CD4-positive, alpha-beta T cell (primary cell): ENCODE measurements at regions of chr7 and their contacts with region 1.

Region 1: DNA sequence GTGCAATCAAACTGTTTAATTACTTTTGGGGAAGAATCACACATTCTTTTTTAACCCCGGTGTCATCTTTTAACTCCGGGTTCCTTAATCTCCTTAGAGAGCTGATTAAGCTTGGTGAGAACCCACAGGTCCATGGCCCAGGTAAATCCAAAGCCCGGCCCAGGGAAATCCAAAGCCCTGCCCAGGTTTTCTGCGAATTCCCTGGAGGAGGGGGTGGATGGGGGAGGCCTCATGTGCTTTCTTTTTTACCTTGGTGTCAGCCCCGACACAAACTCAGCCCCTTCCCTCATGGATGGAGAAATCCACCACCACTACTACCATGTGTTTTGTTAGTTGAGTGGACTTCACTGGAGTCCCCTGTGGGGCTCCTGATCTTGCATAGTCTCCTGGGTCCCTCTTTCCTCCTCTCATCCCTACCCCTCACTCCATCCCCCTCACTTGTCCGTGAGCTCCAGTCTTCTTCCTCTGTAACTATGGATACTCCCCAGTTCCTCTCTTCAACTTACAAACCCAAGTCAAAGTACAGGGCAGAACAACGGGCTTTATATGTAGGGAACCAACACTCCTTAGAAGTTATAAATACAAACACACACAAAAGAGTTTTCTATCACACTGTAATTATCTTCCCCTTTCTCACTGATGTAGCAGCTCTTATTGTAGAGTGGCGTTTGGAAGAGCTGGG is 13.3 kb downstream of the SNX10 start:
- DNase-seq: no peak
- ATAC-seq: no peak
- H3K4me3 ChIP-seq: no peak overlapping the region
- H3K4me3 Mint-ChIP-seq: no peak overlapping the region
- H3K27ac ChIP-seq: no peak overlapping the region
- H3K27ac Mint-ChIP-seq: peak overlapping the region; percentile 27
- H3K4me1 ChIP-seq: peaks cover 11% of the 10 kb centered on the region
- H3K4me1 Mint-ChIP-seq: peaks cover 32% of the 10 kb centered on the region
- H3K27me3 ChIP-seq: no peaks in the 10 kb centered on the region
- H3K27me3 Mint-ChIP-seq: no peaks in the 10 kb centered on the region
- CTCF ChIP-seq: no peak

Region 2: GRCh38 chr7:26437003-26437532 is 132.1 kb after region 1 on chr7:
- CTCF ChIA-PET with region 1: no interaction called
- POLR2A ChIA-PET with region 1: no interaction called
- intact Hi-C with region 1: no loop called
- DNase-seq: no peak
- ATAC-seq: no peak
- H3K4me3 ChIP-seq: no peak overlapping the region
- H3K4me3 Mint-ChIP-seq: no peak overlapping the region
- H3K27ac ChIP-seq: no peak overlapping the region
- H3K27ac Mint-ChIP-seq: no peak overlapping the region
- H3K4me1 ChIP-seq: no peaks in the 10 kb centered on the region
- H3K4me1 Mint-ChIP-seq: no peaks in the 10 kb centered on the region
- H3K27me3 ChIP-seq: no peaks in the 10 kb centered on the region
- H3K27me3 Mint-ChIP-seq: peaks cover 26% of the 10 kb centered on the region
- CTCF ChIP-seq: no peak

Region 3: GRCh38 chr7:26525398-26526264 is 220.7 kb after region 1 on chr7:
- CTCF ChIA-PET with region 1: no interaction called
- POLR2A ChIA-PET with region 1: no interaction called
- intact Hi-C with region 1: loop called in 1 of 2 experiments (anchors 5 kb)
- DNase-seq: no peak
- ATAC-seq: no peak
- H3K4me3 ChIP-seq: no peak overlapping the region
- H3K4me3 Mint-ChIP-seq: no peak overlapping the region
- H3K27ac ChIP-seq: no peak overlapping the region
- H3K27ac Mint-ChIP-seq: no peak overlapping the region
- H3K4me1 ChIP-seq: no peaks in the 10 kb centered on the region
- H3K4me1 Mint-ChIP-seq: no peaks in the 10 kb centered on the region
- H3K27me3 ChIP-seq: peaks cover 0 to 6% of the 10 kb centered on the region in 2 experiments
- H3K27me3 Mint-ChIP-seq: peaks cover 20% of the 10 kb centered on the region
- CTCF ChIP-seq: no peak

Region 4: DNA sequence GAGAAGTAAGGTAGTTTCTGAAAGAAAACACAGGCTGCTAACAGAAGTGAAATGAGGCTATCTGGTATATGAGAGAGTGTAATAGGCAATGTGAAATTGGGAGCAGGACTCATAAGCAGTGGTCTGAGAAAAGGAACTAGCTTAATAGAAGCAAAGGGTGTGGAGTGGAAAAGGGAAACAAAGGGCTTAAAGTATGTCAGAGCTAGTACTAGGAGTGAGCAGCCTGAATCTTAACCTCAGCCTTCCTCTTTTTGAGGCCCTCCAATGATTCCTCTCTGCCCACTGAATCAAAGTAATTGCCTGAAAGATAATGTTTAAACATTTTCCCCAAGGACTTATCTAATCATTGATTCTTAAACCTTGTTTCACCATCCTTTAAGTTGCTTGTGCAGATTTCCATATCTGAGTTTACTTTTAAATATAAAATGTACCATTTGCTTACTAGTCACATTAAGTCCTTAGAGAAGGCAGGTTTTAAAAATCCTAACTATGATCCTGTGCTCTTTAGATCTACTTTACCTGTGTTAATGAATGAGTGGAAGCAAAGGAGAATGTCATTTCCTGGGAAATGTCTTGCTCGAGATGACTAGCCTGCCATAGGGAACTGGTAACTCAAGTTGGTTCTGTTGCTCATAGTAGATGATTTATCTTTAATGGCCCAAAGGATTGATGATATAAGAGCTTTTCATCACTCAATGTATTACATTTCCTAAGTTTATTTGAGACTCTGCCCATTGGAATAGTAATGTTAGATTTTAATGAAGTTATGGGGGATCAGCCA is 404.5 kb after region 1 on chr7:
- CTCF ChIA-PET with region 1: no interaction called
- POLR2A ChIA-PET with region 1: no interaction called
- intact Hi-C with region 1: no loop called
- DNase-seq: no peak
- ATAC-seq: no peak
- H3K4me3 ChIP-seq: no peak overlapping the region
- H3K4me3 Mint-ChIP-seq: no peak overlapping the region
- H3K27ac ChIP-seq: no peak overlapping the region
- H3K27ac Mint-ChIP-seq: no peak overlapping the region
- H3K4me1 ChIP-seq: no peaks in the 10 kb centered on the region
- H3K4me1 Mint-ChIP-seq: no peaks in the 10 kb centered on the region
- H3K27me3 ChIP-seq: no peaks in the 10 kb centered on the region
- H3K27me3 Mint-ChIP-seq: no peaks in the 10 kb centered on the region
- CTCF ChIP-seq: no peak